ENCODE measurements at regions of chr2 and their contacts with region 1.

Region 1: DNA sequence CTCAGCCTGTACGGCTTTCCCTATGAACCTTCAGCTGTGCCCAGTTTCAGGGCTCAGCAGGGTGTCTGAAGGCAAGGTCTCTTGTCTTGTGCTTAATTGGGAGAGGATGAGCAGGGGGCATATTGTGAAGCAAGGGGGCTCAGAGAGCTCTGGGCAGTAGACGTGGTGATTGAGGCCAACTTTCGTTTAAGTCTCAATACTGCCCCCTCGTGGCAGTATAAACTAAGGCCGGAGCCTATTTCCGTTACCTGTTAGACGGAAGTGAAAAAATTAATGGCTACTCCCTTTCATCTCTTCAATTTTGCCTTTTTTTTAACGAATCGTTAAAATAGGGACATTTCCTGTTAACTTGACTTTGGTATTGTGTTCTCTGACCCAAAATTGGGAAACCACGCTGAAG is 193.4 kb downstream of the TDRD15 start:
- DNase-seq: peak in 1 of 2 donors; percentile 69
- H3K4me3 ChIP-seq: no peak overlapping the region
- H3K27ac ChIP-seq: no peak overlapping the region
- H3K4me1 ChIP-seq: no peaks in the 10 kb centered on the region
- H3K27me3 ChIP-seq: no peaks in the 10 kb centered on the region
- CTCF ChIP-seq: peak; percentile 50 to 80 (median 61)

Region 2: DNA sequence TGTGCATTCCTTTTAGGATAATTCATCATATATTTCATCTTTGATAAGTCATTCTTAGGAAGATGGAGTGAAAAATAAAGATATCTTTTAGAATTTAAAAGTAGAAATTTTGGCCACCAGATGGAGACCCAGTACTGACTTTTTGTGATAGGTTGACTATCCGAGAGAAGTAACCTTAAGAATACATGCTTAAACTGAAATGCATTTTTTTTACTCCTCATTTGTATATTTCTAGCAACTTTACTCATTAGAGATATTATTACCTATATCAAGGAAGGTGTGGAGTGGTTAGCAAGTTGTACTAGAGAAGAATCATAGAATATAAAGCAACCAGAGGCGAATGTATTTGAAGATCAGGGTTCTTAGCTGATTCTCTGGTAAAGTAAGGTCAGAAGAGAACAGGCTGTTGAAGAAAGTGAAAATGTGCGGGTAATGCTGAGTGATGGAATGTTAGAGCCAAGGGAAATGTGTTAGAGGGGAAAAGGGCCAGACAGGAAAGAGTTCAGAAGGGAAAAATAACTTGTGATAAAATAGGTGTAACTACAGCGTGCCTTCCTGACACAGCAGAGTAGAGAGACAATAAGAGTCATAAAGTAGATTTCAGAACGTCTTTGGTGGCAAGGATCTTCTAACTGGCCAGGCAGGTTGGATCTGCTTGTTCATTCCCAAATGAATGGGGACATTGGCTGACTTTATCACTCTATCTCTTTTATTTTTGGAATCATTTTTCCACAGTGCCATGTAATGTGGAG is 141.1 kb before region 1 on chr2:
- intact Hi-C with region 1: loop called (anchors 1 kb)
- DNase-seq: no peak
- H3K4me3 ChIP-seq: peak overlapping the region; percentile 25 to 53
- H3K27ac ChIP-seq: peak overlapping the region; percentile 61 to 63
- H3K4me1 ChIP-seq: peaks cover 0 to 7% of the 10 kb centered on the region in 2 donors
- H3K27me3 ChIP-seq: no peaks in the 10 kb centered on the region
- CTCF ChIP-seq: peak; percentile 31 to 52 (median 38)